ENCODE measurements at regions of chr1 and their contacts with region 1.

Region 1: GRCh38 chr1:112715264-112716053 is at the start of gene PPM1J:
- DNase-seq: peak; percentile 98
- H3K4me3 Mint-ChIP-seq: peak within 1 kb of the TSS; percentile 78
- H3K27ac Mint-ChIP-seq: no peak within 1 kb of the TSS
- H3K4me1 Mint-ChIP-seq: peaks cover 11% of the 10 kb centered on the region
- H3K27me3 Mint-ChIP-seq: peaks cover 11% of the 10 kb centered on the region
- total RNA-seq, gene PPM1J: 0.69 to 1.2 TPM

Region 2: DNA sequence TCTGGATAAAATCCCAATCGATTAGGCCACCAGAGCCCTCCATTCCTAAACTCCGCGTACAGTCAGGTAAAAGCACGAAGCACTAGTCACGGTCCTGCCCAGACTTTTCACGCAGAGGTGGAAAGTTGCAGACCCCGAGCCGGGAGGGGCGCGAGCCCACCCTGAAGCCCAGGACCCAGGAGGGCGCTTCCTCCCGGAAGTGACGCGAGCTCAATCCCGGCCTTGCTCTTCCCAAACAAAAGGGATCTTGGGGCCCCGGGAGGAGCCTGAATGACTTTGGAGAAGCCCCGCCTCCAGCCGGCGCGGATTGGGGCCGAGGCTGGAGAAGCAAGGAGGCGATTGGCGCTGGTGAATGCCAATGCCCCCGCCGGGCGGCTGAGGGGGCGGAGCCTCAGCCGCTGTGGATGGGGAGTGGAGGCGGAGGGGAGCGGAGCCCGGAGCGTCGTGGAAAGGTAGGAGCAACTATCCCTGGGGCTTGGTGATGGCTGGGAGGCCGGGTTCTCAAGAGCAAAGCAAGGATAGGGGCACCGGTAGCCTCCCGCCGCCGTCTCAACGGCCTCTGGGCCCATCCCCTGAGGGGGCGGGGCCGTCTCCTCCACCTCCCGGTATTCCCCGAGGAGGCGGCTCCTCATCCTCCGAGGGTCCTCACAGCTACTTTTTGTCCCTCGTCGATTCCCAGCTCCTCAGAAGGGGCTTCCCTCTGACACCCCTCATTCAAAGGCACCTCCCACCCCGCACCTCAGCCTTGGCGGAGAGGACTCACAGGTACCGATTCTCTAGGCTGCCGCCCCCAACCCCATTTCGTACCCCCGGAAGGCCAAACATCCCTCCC is 319.4 kb before region 1 on chr1 and contains the start of gene CTTNBP2NL:
- CTCF ChIA-PET with region 1: interaction called, 68 read pairs
- POLR2A ChIA-PET with region 1: no interaction called
- intact Hi-C with region 1: loop called (anchors 2 kb)
- DNase-seq: peak; percentile 86
- H3K4me3 Mint-ChIP-seq: peak within 1 kb of the TSS; percentile 91
- H3K27ac Mint-ChIP-seq: no peak within 1 kb of the TSS
- H3K4me1 Mint-ChIP-seq: peaks cover 33% of the 10 kb centered on the region
- H3K27me3 Mint-ChIP-seq: peaks cover 14% of the 10 kb centered on the region
- total RNA-seq, gene CTTNBP2NL: 5.4 to 5.9 TPM

Region 3: DNA sequence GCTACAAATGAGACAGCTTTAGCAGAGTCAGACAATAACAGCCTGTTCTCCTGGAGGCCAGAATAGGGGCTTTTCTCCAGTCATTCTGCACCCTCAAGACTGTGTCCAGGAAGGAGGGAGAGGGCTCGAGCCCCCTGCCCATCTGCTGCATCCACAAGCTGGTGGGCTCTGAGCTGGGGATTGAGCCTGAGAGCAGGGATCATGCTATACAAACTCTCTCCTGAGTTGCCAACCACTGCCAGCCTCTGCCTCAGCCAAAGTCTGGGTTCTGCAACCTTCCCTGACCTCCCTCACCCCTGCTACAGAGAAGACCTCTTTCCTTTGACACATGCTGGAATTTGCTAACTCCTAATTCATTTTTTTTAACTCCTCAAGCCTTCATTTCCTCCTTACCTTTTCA is 14.4 kb after region 1 on chr1:
- CTCF ChIA-PET with region 1: interaction called, 17 read pairs
- POLR2A ChIA-PET with region 1: no interaction called
- intact Hi-C with region 1: no loop called
- DNase-seq: no peak
- H3K4me3 Mint-ChIP-seq: no peak overlapping the region
- H3K27ac Mint-ChIP-seq: no peak overlapping the region
- H3K4me1 Mint-ChIP-seq: no peaks in the 10 kb centered on the region
- H3K27me3 Mint-ChIP-seq: no peaks in the 10 kb centered on the region

Region 4: DNA sequence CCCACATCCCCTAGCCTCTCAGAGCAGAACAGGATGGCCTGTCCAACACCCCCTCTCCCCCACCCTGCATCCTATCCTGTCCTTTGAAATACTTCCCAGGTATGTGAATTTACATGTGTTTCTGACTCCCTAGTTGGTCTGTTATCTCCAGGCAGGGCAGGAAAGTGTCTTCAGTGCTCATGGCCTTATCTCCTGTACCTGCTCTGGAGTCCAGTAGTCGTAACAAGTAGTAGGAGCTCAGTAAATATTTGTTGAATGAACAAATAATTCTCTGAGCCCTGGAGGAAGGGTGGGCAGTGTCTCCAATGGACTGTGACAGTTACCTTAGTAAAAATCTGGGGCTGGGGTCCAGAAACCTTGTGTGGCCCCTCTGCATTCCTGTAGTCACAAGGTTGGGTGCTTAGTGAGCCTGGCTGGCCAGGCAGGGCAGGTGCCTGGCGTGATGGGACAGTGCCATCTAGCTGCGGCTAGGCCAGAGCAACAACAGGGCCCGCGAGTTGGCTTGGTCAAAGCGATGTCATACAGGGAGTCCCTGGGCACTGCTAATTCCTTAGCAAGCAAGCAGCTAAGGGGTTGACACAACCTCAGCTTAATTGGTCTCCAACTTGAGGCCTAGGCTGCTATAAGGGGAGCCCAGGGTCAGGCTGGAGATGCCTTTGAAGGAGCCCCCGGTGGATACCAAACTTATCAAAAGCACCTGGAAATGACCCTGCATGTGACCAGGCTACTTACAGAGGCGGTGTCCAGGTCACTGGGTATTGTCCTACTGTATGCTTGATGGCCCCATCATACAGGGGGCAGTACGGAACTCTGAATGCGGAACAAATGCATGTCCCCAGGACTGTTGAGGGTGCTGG is 88.7 kb after region 1 on chr1:
- CTCF ChIA-PET with region 1: interaction called, 354 read pairs
- POLR2A ChIA-PET with region 1: no interaction called
- intact Hi-C with region 1: loop called (anchors 1 kb)
- DNase-seq: peak; percentile 77
- H3K4me3 Mint-ChIP-seq: no peak overlapping the region
- H3K27ac Mint-ChIP-seq: no peak overlapping the region
- H3K4me1 Mint-ChIP-seq: peaks cover 2% of the 10 kb centered on the region
- H3K27me3 Mint-ChIP-seq: peaks cover 1% of the 10 kb centered on the region

Region 5: DNA sequence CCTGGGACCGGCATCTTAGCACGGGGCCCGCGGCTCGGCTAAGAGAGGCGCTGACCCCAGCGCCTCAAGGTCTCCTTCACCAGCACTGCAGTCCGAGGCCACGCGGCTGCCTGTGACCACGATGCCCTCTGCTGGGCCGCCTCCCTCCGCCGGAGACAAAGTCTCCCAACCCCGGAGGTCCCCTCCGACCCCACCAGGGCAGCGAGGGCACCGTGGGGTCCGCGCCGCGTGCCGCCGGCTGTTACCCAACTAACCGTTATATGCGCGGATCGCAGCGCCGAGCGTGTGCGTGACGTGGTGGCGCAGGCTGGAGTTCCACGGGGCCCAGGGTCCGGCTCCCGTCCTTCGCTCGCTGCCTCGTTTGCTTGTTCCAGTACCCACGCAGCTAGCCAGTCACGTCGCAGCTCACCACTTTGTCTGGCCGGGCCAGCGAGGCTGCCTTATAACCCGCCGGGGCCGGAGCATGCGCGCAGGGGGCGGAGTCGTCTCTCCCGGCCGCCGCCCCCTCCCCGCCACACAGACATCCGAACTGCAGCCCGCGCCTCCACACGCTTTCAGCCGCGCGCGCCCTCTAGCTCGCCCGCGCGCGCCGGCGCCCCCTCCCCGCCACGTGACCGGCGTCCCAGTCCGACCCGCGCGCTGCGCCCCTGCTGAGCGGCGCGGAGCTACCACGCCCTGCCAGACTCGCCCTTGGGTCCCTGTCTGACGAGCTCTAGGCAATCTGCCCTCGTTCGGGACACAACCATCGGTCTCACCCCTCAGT is 240.5 kb after region 1 on chr1 and contains the start of gene SLC16A1:
- CTCF ChIA-PET with region 1: interaction called, 4 read pairs
- POLR2A ChIA-PET with region 1: interaction called, 3 read pairs
- intact Hi-C with region 1: loop called (anchors 2 kb)
- DNase-seq: peak; percentile 92
- H3K4me3 Mint-ChIP-seq: peak within 1 kb of the TSS; percentile 98
- H3K27ac Mint-ChIP-seq: peak within 1 kb of the TSS; percentile 97
- H3K4me1 Mint-ChIP-seq: peaks cover 58% of the 10 kb centered on the region
- H3K27me3 Mint-ChIP-seq: no peaks in the 10 kb centered on the region
- total RNA-seq, gene SLC16A1: 48.7 to 53.3 TPM

Region 6: GRCh38 chr1:113072757-113073478 is 357.5 kb after region 1 on chr1 and contains the start of gene LRIG2:
- CTCF ChIA-PET with region 1: interaction called, 90 read pairs
- POLR2A ChIA-PET with region 1: interaction called, 3 read pairs
- intact Hi-C with region 1: loop called (anchors 2 kb)
- DNase-seq: peak; percentile 99
- H3K4me3 Mint-ChIP-seq: peak within 1 kb of the TSS; percentile 98
- H3K27ac Mint-ChIP-seq: peak within 1 kb of the TSS; percentile 91
- H3K4me1 Mint-ChIP-seq: peaks cover 30% of the 10 kb centered on the region
- H3K27me3 Mint-ChIP-seq: no peaks in the 10 kb centered on the region
- total RNA-seq, gene LRIG2: 7.1 to 8.3 TPM